Caco-2 (cell line): ENCODE measurements at regions of chr6 and their contacts with region 1.

Region 1: DNA sequence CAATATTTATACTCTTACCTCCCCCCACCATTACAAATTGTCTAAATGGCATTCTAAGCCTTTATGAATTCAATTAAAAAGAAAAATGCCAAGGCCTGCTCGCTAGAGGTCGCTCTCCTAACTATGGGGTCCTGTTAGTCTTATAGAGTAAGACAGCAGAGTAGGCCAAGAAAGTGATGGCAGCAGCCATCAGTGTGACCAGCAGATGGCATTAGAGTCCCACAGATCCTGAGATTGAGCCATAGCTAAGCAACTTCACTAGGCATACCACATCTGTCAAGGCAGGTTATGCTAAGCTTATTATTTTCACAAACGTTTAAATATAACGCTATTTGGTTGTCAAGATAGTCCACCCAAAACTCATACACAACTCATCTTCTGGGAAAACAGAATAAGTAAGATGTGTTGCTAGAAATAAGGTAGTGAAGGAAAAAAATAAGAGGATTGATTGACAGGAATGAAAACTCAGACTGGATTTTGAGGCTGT is 57.6 kb upstream of the SCAF8 start:
- DNase-seq: peak; percentile 86 to 88
- H3K4me3 ChIP-seq: no peak overlapping the region
- H3K4me3 Mint-ChIP-seq: no peak overlapping the region
- H3K27ac Mint-ChIP-seq: no peak overlapping the region
- H3K4me1 ChIP-seq: no peaks in the 10 kb centered on the region
- H3K4me1 Mint-ChIP-seq: no peaks in the 10 kb centered on the region
- H3K27me3 ChIP-seq: no peaks in the 10 kb centered on the region
- H3K27me3 Mint-ChIP-seq: no peaks in the 10 kb centered on the region
- CTCF ChIP-seq: peak; percentile 95 to 98

Region 2: DNA sequence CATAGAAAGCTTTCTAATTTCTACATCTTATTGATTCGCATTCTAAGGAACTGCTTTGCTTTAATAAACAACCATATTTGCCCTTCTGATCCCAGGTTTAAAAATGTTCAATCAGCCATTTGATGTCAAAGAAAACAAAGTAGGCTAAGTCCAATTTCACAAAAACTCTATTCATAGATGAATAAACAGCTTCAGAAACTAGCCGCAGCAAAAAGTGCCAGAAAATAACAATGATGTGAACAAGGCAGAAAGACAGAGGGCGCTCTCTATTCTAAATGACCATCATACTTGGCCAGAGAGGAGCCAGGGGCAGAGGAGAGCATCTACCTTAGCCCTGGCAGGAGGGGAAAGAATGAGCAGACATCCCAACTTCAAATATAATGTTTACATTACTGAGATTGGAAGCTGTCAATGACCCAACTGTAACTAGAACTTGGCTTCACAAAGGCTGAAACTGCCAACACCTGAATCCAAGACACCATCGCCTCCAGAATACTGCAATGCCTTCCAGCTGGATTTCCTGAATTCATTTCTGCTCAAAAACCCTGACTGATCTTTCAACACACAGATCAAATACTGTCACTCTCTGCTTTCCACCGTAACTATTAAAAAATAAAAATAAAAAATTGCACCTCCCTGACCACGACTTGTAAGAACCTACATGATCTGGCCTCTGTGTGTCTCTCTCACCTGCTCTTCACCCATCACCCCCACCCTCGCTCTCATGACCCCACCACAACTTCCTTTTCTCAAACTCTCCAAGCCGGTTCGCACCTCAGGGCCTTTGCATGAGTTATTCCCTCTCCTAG is 174.7 kb before region 1 on chr6:
- CTCF ChIA-PET with region 1: no interaction called
- POLR2A ChIA-PET with region 1: no interaction called
- intact Hi-C with region 1: loop called (anchors 2 kb)
- DNase-seq: peak in 1 of 2 experiments; percentile 29
- H3K4me3 ChIP-seq: no peak overlapping the region
- H3K4me3 Mint-ChIP-seq: no peak overlapping the region
- H3K27ac Mint-ChIP-seq: no peak overlapping the region
- H3K4me1 ChIP-seq: no peaks in the 10 kb centered on the region
- H3K4me1 Mint-ChIP-seq: peaks cover 23% of the 10 kb centered on the region
- H3K27me3 ChIP-seq: no peaks in the 10 kb centered on the region
- H3K27me3 Mint-ChIP-seq: no peaks in the 10 kb centered on the region
- CTCF ChIP-seq: peak in 1 of 2 experiments; percentile 29

Region 3: GRCh38 chr6:154632119-154632518 is 43.5 kb before region 1 on chr6:
- CTCF ChIA-PET with region 1: no interaction called
- POLR2A ChIA-PET with region 1: no interaction called
- intact Hi-C with region 1: no loop called
- DNase-seq: no peak
- H3K4me3 ChIP-seq: no peak overlapping the region
- H3K4me3 Mint-ChIP-seq: no peak overlapping the region
- H3K27ac Mint-ChIP-seq: no peak overlapping the region
- H3K4me1 ChIP-seq: no peaks in the 10 kb centered on the region
- H3K4me1 Mint-ChIP-seq: no peaks in the 10 kb centered on the region
- H3K27me3 ChIP-seq: no peaks in the 10 kb centered on the region
- H3K27me3 Mint-ChIP-seq: no peaks in the 10 kb centered on the region
- CTCF ChIP-seq: no peak

Region 4: DNA sequence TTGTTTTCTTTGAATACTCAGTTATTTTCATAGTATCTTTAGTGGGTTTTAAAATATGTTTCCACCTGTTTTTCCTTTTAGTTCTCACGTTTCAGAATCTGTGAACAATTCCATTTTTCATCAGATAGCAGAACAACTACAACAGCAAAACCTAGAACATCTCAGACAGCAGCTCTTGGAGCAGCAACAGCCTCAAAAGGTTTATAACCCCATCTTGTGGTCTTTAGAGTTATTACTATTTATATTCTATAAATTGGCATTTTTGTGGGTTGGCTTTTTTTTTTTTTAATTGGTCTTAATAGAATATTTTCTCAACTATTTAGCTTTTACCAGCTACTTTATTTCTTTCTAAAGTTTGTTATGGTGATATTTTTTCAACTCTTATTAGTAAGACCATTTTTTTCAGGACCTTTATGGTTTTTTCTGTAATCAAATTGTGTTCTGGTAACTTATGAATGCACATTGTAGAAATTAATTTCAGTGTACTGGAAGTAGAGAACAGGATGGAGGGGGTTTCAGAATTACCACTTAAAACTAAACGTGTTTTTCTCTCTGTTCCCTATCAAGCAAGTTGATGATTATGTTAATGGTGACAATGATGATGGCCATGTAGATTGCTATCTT is 129.8 kb after region 1 on chr6:
- CTCF ChIA-PET with region 1: interaction called, 42 read pairs
- POLR2A ChIA-PET with region 1: no interaction called
- intact Hi-C with region 1: loop called (anchors 1 kb)
- DNase-seq: no peak
- H3K4me3 ChIP-seq: no peak overlapping the region
- H3K4me3 Mint-ChIP-seq: no peak overlapping the region
- H3K27ac Mint-ChIP-seq: no peak overlapping the region
- H3K4me1 ChIP-seq: no peaks in the 10 kb centered on the region
- H3K4me1 Mint-ChIP-seq: peaks cover 6% of the 10 kb centered on the region
- H3K27me3 ChIP-seq: no peaks in the 10 kb centered on the region
- H3K27me3 Mint-ChIP-seq: no peaks in the 10 kb centered on the region
- CTCF ChIP-seq: peak; percentile 36 to 46

Region 5: DNA sequence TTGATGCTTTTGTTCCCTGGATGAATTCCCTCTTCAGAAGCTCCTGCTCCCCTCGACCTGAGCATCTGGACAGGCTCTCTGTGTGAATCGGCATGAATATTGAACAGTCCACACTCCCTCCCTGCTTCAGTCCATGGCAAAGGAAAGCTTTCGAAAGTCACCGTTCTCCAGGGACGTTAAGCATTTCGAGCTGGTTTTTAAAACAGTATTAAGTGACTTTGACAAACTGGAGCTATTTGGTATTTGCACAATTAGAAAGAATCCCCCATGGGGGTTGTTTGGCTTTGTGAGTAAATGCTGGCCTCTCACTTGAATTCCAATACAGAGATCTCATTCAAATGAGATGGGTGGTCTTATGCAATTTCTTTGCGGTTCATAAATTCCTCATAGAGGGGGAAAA is 234.2 kb after region 1 on chr6:
- CTCF ChIA-PET with region 1: no interaction called
- POLR2A ChIA-PET with region 1: no interaction called
- intact Hi-C with region 1: loop called (anchors 5 kb)
- DNase-seq: peak in 1 of 2 experiments; percentile 0
- H3K4me3 ChIP-seq: no peak overlapping the region
- H3K4me3 Mint-ChIP-seq: no peak overlapping the region
- H3K27ac Mint-ChIP-seq: no peak overlapping the region
- H3K4me1 ChIP-seq: no peaks in the 10 kb centered on the region
- H3K4me1 Mint-ChIP-seq: no peaks in the 10 kb centered on the region
- H3K27me3 ChIP-seq: no peaks in the 10 kb centered on the region
- H3K27me3 Mint-ChIP-seq: no peaks in the 10 kb centered on the region
- CTCF ChIP-seq: no peak